IMR-90 (cell line): ENCODE measurements at regions of chr13 and their contacts with region 1.

Region 1: DNA sequence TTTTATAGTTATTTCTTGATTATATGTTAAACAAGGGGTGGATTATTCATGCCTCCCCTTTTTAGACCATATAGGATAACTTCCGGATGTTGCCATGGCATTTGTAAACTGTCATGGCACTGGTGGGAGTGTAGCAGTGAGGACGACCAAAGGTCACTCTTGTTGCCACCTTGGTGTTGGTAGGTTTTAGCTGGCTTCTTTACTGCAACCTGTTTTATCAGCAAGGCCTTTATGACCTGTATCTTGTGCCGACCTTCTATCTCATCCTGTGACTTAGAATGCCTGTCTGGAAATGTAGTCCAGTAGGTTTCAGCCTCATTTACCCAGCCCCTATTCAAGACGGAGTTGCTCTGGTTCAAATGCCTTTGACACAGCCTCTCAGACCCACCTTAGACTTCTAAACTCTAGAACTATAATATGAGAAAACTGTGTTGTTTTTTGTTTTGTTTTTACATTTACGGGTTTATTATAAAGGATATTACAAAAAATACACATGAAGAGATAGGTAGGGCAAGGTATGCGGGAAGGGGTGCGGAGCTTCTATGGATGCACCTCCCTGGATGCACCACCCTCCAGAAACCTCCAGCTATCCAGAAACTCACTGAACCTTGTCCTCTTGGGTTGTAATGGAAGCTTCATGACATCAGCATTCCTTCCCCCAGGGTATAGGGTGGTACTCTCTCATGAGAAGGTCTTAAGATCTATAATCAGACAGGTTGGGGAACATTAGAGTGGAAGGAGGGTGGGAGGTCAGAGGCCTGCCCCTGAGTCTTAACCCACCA is 15.8 kb upstream of the SPRYD7 start:
- DNase-seq: no peak
- ATAC-seq: no peak
- H3K4me3 ChIP-seq: no peak overlapping the region
- H3K27ac ChIP-seq: no peak overlapping the region
- H3K4me1 ChIP-seq: peaks cover 6% of the 10 kb centered on the region; the same call in 1 of the 2 replicates
- H3K27me3 ChIP-seq: no peaks in the 10 kb centered on the region
- CTCF ChIP-seq: no peak
- POLR2A ChIP-seq: no peak
- RAD21 ChIP-seq: no peak

Region 2: GRCh38 chr13:49776871-49777270 is 175.1 kb before region 1 on chr13:
- CTCF ChIA-PET with region 1: no interaction called
- POLR2A ChIA-PET with region 1: no interaction called
- dilution Hi-C with region 1: no loop called
- in situ Hi-C with region 1: no loop called
- intact Hi-C with region 1: no loop called
- DNase-seq: peak; percentile 43
- ATAC-seq: peak; percentile 87
- H3K4me3 ChIP-seq: no peak overlapping the region
- H3K27ac ChIP-seq: no peak overlapping the region
- H3K4me1 ChIP-seq: peaks cover 5% of the 10 kb centered on the region
- H3K27me3 ChIP-seq: no peaks in the 10 kb centered on the region
- CTCF ChIP-seq: no peak
- POLR2A ChIP-seq: no peak
- RAD21 ChIP-seq: no peak

Region 3: DNA sequence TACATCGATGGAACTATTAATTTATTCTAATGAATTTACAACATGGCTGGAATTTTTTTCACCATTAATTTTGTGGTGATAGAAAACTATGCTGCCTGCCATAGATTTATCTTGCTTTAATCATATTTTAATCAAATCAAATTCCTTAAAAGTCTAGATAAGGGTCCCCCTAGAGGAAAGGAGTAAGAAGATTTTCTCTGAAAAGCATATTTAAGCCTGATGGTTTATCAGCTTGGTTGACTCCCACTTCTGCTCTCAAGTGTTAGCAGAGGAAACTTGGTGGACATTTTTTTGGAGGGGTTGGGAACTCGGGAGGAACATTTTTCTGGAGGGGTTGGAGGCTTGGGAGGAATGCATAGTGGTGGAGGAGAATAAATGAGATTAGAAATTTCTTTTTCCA is 316.6 kb after region 1 on chr13:
- CTCF ChIA-PET with region 1: no interaction called
- POLR2A ChIA-PET with region 1: no interaction called
- dilution Hi-C with region 1: no loop called
- in situ Hi-C with region 1: no loop called
- intact Hi-C with region 1: no loop called
- DNase-seq: peak; percentile 5
- ATAC-seq: no peak
- H3K4me3 ChIP-seq: no peak overlapping the region
- H3K27ac ChIP-seq: no peak overlapping the region
- H3K4me1 ChIP-seq: no peaks in the 10 kb centered on the region
- H3K27me3 ChIP-seq: peaks cover 6% of the 10 kb centered on the region; the same call in 1 of the 2 replicates
- CTCF ChIP-seq: 0 out of 2 replicates have a peak, but pooled peaks have one; percentile 11
- POLR2A ChIP-seq: no peak
- RAD21 ChIP-seq: no peak

Region 4: GRCh38 chr13:50685491-50685890 is 733.5 kb after region 1 on chr13:
- CTCF ChIA-PET with region 1: no interaction called
- POLR2A ChIA-PET with region 1: interaction called, 11 read pairs
- dilution Hi-C with region 1: no loop called
- in situ Hi-C with region 1: no loop called
- intact Hi-C with region 1: no loop called
- DNase-seq: no peak
- ATAC-seq: no peak
- H3K4me3 ChIP-seq: no peak overlapping the region
- H3K27ac ChIP-seq: no peak overlapping the region
- H3K4me1 ChIP-seq: no peaks in the 10 kb centered on the region
- H3K27me3 ChIP-seq: peaks cover 20% of the 10 kb centered on the region
- CTCF ChIP-seq: no peak
- POLR2A ChIP-seq: no peak
- RAD21 ChIP-seq: no peak